ENCODE measurements at regions of chr1 and their contacts with region 1.

Region 1: DNA sequence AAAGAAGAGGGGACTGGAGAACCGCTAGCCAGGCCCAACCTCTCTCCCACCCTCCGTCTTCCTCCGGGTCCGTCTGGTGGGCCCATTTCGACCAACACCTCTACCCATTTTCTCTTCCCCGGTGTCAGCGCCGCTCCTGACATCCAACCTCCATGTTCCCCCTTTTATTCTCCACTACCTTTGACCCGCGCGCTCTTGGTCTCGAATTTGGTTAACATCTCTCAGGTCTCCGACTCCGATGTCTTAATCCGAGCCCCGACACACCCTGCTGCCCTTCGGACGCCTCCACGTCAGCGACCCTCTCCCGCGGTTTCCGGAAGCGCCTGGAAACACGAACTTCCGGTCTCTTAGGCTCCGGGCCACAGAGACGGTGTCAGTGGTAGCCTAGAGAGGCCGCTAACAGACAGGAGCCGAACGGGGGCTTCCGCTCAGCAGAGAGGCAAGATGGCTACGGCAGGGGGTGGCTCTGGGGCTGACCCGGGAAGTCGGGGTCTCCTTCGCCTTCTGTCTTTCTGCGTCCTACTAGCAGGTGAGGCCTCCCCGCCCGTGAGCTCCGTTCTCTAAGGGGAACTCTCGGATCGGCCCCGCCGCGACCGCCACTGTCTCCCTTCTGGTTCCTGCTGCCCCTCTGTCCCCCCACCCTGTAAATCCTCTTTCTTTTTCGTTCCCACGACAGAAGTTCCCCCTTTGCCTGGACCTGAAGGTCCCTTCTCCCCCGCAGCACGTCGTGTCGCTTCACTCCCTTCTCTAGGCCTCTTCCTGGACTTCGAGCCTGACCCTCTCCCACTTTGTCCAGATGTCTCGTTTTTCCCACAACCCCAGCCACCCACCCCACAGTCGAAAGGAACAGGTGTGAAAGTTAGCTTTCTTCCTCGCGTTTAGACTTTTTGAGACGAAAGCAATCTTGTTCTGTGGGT is at the starts of genes COPA and NCSTN:
- DNase-seq: peak; percentile 98
- H3K4me3 Mint-ChIP-seq: peak within 1 kb of the TSS; percentile 87
- H3K27ac Mint-ChIP-seq: peak within 1 kb of the TSS; percentile 99
- H3K4me1 Mint-ChIP-seq: peaks cover 29% of the 10 kb centered on the region
- H3K27me3 Mint-ChIP-seq: no peaks in the 10 kb centered on the region
- CTCF ChIP-seq: no peak
- total RNA-seq, gene COPA: 273 and 353 TPM in 2 replicates
- total RNA-seq, gene NCSTN: 125 and 129 TPM in 2 replicates

Region 2: GRCh38 chr1:159548126-159548525 is 795.1 kb before region 1 on chr1:
- CTCF ChIA-PET with region 1: no interaction called
- POLR2A ChIA-PET with region 1: no interaction called
- intact Hi-C with region 1: no loop called
- DNase-seq: no peak
- H3K4me3 Mint-ChIP-seq: no peak overlapping the region
- H3K27ac Mint-ChIP-seq: no peak overlapping the region
- H3K4me1 Mint-ChIP-seq: peaks cover 5% of the 10 kb centered on the region
- H3K27me3 Mint-ChIP-seq: no peaks in the 10 kb centered on the region
- CTCF ChIP-seq: no peak

Region 3: GRCh38 chr1:160328184-160328583 is 15.0 kb before region 1 on chr1:
- CTCF ChIA-PET with region 1: interaction called, 10 read pairs
- POLR2A ChIA-PET with region 1: interaction called, 13 read pairs
- intact Hi-C with region 1: no loop called
- DNase-seq: no peak
- H3K4me3 Mint-ChIP-seq: no peak overlapping the region
- H3K27ac Mint-ChIP-seq: no peak overlapping the region
- H3K4me1 Mint-ChIP-seq: no peaks in the 10 kb centered on the region
- H3K27me3 Mint-ChIP-seq: no peaks in the 10 kb centered on the region
- CTCF ChIP-seq: no peak

Region 4: GRCh38 chr1:160354388-160354985 is 11.3 kb after region 1 on chr1:
- CTCF ChIA-PET with region 1: interaction called, 47 read pairs
- POLR2A ChIA-PET with region 1: interaction called, 18 read pairs
- intact Hi-C with region 1: no loop called
- DNase-seq: peak; percentile 39
- H3K4me3 Mint-ChIP-seq: no peak overlapping the region
- H3K27ac Mint-ChIP-seq: no peak overlapping the region
- H3K4me1 Mint-ChIP-seq: no peaks in the 10 kb centered on the region
- H3K27me3 Mint-ChIP-seq: no peaks in the 10 kb centered on the region
- CTCF ChIP-seq: peak; percentile 46

Region 5: DNA sequence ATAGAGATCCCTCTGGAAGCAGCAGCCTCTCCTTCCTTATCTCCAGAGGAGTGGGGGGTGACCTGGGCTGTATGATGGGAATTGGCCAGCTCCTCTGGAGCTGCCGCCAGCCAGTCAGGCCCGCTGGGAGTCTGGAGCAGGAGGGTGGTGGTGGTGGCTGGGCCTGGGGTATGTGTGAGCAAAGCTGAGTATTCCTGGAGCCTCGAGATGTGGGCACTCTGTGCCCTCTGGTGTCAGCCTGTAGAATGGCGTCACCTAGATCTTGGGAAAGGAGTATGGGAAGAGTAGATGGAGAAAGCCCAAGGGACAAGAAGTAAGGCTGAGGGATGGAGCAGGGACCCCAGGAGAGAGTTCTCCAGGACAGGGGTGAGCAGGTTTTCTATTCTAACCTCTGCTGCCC is 73.2 kb after region 1 on chr1:
- CTCF ChIA-PET with region 1: interaction called, 37 read pairs
- POLR2A ChIA-PET with region 1: interaction called, 12 read pairs
- intact Hi-C with region 1: no loop called
- DNase-seq: peak; percentile 77
- H3K4me3 Mint-ChIP-seq: no peak overlapping the region
- H3K27ac Mint-ChIP-seq: no peak overlapping the region
- H3K4me1 Mint-ChIP-seq: peaks cover 12% of the 10 kb centered on the region
- H3K27me3 Mint-ChIP-seq: peaks cover 11% of the 10 kb centered on the region
- CTCF ChIP-seq: peak; percentile 83

Region 6: DNA sequence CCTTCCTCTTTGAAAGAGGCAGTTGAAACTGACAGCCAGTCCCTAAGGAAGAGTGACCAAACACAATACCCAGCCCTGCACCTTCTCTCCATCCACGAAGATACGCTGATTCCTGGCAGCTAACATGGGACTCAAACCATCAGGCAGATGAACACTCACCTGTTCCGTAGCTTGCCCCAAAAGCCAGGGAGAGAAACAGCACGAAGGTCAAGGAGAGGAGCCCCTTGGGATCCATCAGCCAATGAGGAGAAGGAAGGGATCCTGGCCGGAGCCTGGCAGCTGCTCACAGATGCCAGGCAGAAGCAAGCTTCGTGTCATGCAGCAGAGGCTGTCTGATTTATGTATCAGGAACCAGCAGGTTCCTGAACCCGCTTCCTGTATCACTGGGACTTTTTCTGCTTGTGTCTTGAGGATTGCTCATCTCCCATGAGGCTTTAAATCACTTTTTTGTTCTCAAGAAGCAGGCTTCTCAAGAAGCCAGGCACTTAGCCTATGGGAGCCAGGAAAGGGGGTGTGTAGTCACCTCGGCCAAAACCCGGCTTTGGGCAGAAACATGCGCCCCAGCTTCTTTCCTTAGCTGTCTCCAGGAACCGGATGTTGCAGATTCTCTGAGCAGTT is 303.6 kb after region 1 on chr1 and contains the start of gene SLAMF1:
- CTCF ChIA-PET with region 1: no interaction called
- POLR2A ChIA-PET with region 1: no interaction called
- intact Hi-C with region 1: no loop called
- DNase-seq: peak; percentile 16
- H3K4me3 Mint-ChIP-seq: no peak within 1 kb of the TSS
- H3K27ac Mint-ChIP-seq: no peak within 1 kb of the TSS
- H3K4me1 Mint-ChIP-seq: no peaks in the 10 kb centered on the region
- H3K27me3 Mint-ChIP-seq: no peaks in the 10 kb centered on the region
- CTCF ChIP-seq: no peak
- total RNA-seq, gene SLAMF1: not detected in 2 replicates

Region 7: GRCh38 chr1:161082991-161083742 is 740.0 kb after region 1 on chr1:
- CTCF ChIA-PET with region 1: no interaction called
- POLR2A ChIA-PET with region 1: no interaction called
- intact Hi-C with region 1: loop called (anchors 10 kb)
- DNase-seq: peak; percentile 98
- H3K4me3 Mint-ChIP-seq: peak overlapping the region; percentile 4
- H3K27ac Mint-ChIP-seq: peak overlapping the region; percentile 90
- H3K4me1 Mint-ChIP-seq: peaks cover 73% of the 10 kb centered on the region
- H3K27me3 Mint-ChIP-seq: no peaks in the 10 kb centered on the region
- CTCF ChIP-seq: no peak